GM13976 (cell line): ENCODE measurements at regions of chr2 and their contacts with region 1.

Region 1: GRCh38 chr2:158903711-158904443 is 64.6 kb upstream of the TANC1 start:
- DNase-seq: no peak
- CTCF ChIP-seq: no peak

Region 2: DNA sequence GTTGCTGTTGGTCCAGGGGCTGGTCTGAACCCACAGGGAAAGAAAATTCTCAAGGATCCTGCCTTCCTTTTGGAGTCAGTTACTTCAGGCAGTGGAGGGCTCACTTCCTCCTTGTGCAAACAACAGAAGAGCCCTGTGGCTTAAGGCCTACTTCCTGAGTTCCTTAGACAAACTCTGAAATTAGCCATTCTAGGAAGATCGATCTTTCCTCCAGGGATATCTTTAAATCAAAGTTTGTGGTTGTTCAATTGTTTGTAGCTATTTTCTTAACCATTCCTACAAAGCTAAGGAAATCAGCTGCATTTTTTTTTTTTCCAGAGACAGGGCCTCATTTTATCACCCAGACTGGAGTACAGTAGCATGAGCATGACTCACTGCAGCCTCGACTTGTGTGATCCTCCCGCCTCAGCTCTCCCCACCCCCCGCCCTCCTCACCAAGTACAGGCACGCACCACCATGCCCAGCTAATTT is 220.6 kb after region 1 on chr2:
- in situ Hi-C with region 1: loop called (anchors 10 kb)
- DNase-seq: no peak
- CTCF ChIP-seq: no peak

Region 3: GRCh38 chr2:159684796-159685195 is 780.9 kb after region 1 on chr2:
- in situ Hi-C with region 1: no loop called
- DNase-seq: no peak
- CTCF ChIP-seq: no peak